Left cardiac atrium (tissue), 4 donors: ENCODE measurements at regions of chr1 and their contacts with region 1.

Region 1: DNA sequence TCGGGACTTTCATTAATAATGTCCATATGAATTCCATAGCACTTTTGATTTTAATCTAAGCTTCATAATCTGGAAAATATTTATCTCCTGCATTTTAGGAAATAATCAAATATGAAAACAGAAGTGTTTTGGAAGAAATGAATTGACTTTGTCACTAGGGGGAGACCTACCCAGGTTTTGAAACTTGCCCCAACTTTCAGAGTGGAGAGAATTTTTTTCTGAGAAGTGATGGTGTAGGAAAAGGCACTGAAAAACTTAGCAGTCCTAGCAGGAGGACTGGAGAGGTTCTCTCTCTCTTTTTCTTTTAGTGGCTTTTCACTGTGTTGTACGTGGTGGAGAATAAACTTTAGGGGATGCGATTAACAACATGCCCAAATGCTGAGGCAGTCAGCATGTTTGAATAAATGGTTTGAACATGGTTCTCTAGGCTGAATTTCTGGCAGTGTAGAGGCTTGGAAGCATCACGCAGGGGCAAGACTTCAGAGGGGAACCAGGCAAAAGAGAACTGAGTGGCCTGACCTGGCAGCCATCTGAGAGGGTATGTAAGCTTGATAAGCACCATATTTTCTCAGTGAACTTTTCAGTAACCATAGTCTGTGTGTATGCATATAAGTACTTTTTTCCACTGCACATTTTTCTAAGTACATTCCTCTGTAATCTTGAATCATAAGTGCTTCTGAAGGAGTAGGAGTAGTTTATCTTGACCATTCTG is 68.3 kb upstream of the NEK7 start:
- DNase-seq: peak; percentile 18
- ATAC-seq: peak; percentile 65 to 75

Region 2: GRCh38 chr1:197606168-197606845 is 482.2 kb before region 1 on chr1:
- intact Hi-C with region 1: no loop called
- DNase-seq: no peak
- ATAC-seq: no peak

Region 3: DNA sequence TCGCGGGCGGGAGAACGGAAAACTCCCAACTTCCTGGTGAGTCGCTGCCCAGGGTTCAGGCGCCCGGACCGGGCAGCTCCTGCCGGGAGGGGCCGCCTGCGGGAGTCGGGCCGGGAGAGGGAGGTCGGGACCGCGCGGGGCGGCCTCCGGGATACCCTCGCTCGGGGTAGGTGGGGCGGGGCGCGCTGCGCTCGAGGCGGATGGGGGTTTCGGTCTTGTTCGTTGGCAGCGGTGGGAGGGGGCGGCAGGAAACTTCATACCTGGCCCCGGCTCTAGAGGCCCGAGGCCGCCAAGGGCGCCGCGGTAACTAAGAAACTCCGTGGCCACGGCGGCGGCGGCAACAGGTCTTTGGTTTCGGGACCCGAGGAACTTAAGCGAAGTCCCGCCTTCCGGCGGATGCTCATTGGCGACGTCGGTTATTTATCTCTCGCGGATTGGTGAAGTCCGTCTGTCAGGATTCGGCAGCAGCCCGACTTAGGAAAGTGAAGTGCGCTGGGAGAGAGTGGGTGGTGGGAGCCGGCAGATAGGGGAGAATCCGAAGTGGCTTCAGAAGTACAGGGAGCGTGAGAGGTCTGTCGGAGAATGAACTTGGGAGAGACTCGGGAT is 68.8 kb after region 1 on chr1:
- intact Hi-C with region 1: loop called in 1 of 2 experiments (anchors 5 kb)
- DNase-seq: peak; percentile 91
- ATAC-seq: peak; percentile 71 to 74

Region 4: DNA sequence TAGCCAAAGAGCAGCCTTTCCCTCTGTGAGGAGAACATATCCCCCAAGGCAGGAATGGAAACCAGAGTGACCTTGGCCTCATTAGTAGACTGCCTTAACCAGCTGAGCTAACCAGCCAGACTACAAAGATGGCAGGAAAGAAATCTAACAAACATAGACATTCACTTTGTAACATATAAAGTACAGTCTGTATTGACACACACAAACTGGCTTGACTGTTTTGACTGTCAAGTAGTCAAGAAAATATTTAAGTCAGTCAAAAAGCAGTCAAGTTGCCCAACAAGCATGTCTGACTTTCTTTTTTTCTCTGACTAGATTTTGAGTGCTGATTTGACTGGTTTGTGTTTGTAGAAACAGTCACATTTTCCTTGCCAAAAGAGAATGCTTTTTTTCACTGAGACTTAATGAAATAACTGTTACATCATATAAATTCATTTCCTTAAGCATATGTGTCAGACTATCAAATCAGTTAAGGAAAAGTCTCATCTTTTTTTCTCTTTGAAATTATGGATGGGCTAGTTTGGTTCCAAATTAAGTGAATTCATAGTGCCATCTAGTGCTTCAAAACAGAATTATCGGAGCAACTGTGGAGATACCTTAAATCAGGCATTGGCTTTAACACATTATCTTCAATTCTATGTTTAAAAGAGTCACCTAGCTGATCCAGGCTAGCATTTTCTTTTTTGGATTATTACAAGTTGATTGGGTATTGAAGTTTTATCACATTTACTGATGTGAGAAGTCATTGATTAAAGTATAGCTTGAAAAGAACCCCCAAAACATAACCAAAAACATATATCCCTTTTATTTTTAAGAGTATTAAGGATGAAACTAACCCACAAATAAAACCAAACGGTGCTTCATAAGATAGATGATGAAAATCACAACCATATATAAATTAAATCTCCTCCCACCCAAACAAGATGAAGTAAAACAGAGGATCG is 377.0 kb after region 1 on chr1:
- intact Hi-C with region 1: loop called in 1 of 2 experiments (anchors 5 kb)
- DNase-seq: no peak
- ATAC-seq: peak in 1 of 2 donors; percentile 73